Thyroid gland (tissue), 4 donors: ENCODE measurements at regions of chr3 and their contacts with region 1.

Region 1: GRCh38 chr3:97971677-97972567 is at the start of gene RIOX2:
- DNase-seq: peak; percentile 81
- H3K4me3 ChIP-seq: peak within 1 kb of the TSS in 2 of 3 donors; percentile 46 to 79
- H3K27ac ChIP-seq: peak within 1 kb of the TSS; percentile 76 to 97 (median 94)
- H3K4me1 ChIP-seq: peaks cover 23 to 46% of the 10 kb centered on the region in 2 donors
- H3K27me3 ChIP-seq: no peaks in the 10 kb centered on the region
- CTCF ChIP-seq: no peak
- POLR2A ChIP-seq: peak; percentile 58 to 92
- total RNA-seq, gene RIOX2: 61.6 to 109 (median 89.9) TPM

Region 2: DNA sequence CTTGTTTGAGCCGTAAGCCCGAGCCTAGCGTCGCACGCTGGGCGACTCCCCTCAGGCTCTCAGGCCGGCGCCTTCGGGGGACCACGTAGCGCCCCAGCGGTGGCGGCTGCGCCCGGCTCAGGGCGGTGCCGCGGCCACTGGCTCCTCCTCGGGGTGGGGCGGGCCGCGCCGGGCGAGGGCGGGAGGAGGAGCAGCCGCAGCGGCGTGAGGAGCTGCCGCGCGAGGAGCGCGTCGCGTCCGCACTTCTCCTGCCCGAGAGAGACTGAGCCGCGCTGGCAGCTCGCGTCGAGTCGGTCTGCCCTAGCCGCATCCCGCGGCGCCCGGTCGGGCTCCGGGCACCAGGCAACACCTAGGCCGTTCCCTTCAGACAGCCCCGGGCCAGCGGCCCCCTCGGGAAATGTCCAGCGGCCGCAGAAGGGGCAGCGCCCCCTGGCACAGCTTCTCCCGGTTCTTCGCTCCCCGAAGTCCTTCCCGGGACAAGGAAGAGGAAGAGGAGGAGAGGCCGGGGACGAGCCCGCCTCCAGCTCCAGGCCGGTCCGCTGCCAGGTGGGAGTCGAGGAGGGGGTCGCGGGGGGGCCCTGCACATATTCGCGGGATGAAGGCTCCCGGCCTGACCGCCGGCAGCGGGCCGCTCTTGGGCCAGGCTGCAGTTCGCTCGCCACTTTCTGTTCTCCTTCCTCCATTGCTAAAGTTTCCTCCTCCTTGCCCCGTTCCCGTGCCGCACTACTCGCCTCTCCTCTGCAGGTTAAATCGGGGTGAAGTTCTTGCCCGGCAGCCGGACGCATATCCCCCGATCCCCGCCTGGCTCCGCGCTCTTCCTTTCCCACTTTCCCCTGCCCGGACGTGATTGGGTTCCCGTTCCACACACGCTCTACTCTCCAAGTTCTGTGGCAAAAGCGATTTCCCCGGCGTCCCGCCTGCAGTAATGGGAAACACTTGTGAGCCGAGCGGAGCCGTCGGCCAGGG is 149.8 kb before region 1 on chr3 and contains the start of gene CRYBG3:
- intact Hi-C with region 1: loop called (anchors 5 kb)
- DNase-seq: peak; percentile 84 to 89
- H3K4me3 ChIP-seq: peak within 1 kb of the TSS; percentile 61 to 82 (median 66)
- H3K27ac ChIP-seq: peak within 1 kb of the TSS; percentile 87 to 94 (median 89)
- H3K4me1 ChIP-seq: peaks cover 18 to 27% of the 10 kb centered on the region in 2 donors
- H3K27me3 ChIP-seq: no peaks in the 10 kb centered on the region
- CTCF ChIP-seq: peak in 3 of 6 experiments; percentile 7 to 23 (median 15)
- POLR2A ChIP-seq: peak in 1 of 2 donors; percentile 98
- total RNA-seq, gene CRYBG3: 65.3 to 108 (median 79.4) TPM

Region 3: GRCh38 chr3:98109807-98110549 is 138.1 kb after region 1 on chr3:
- intact Hi-C with region 1: no loop called
- DNase-seq: no peak
- H3K4me3 ChIP-seq: no peak overlapping the region
- H3K27ac ChIP-seq: no peak overlapping the region
- H3K4me1 ChIP-seq: no peaks in the 10 kb centered on the region
- H3K27me3 ChIP-seq: no peaks in the 10 kb centered on the region
- CTCF ChIP-seq: no peak
- POLR2A ChIP-seq: no peak